ENCODE measurements at regions of chr5 and their contacts with region 1.

Region 1: GRCh38 chr5:759111-759751 is 25.3 kb downstream of the ZDHHC11B start:
- DNase-seq: peak; percentile 56
- ATAC-seq: peak; percentile 65
- H3K4me3 Mint-ChIP-seq: peak overlapping the region; percentile 7
- H3K27ac Mint-ChIP-seq: no peak overlapping the region
- H3K4me1 Mint-ChIP-seq: peaks cover 21% of the 10 kb centered on the region
- H3K27me3 Mint-ChIP-seq: peaks cover 2% of the 10 kb centered on the region

Region 2: GRCh38 chr5:431001-431710 is 328.1 kb before region 1 on chr5:
- CTCF ChIA-PET with region 1: no interaction called
- POLR2A ChIA-PET with region 1: no interaction called
- intact Hi-C with region 1: no loop called
- DNase-seq: peak; percentile 73
- ATAC-seq: peak; percentile 90
- H3K4me3 Mint-ChIP-seq: no peak overlapping the region
- H3K27ac Mint-ChIP-seq: no peak overlapping the region
- H3K4me1 Mint-ChIP-seq: no peaks in the 10 kb centered on the region
- H3K27me3 Mint-ChIP-seq: peaks cover 4% of the 10 kb centered on the region

Region 3: GRCh38 chr5:691817-692528 is 67.3 kb before region 1 on chr5:
- CTCF ChIA-PET with region 1: no interaction called
- POLR2A ChIA-PET with region 1: no interaction called
- intact Hi-C with region 1: loop called in 1 of 2 experiments (anchors 2 kb)
- DNase-seq: no peak
- ATAC-seq: no peak
- H3K4me3 Mint-ChIP-seq: peak overlapping the region; percentile 19
- H3K27ac Mint-ChIP-seq: no peak overlapping the region
- H3K4me1 Mint-ChIP-seq: no peaks in the 10 kb centered on the region
- H3K27me3 Mint-ChIP-seq: peaks cover 3% of the 10 kb centered on the region

Region 4: DNA sequence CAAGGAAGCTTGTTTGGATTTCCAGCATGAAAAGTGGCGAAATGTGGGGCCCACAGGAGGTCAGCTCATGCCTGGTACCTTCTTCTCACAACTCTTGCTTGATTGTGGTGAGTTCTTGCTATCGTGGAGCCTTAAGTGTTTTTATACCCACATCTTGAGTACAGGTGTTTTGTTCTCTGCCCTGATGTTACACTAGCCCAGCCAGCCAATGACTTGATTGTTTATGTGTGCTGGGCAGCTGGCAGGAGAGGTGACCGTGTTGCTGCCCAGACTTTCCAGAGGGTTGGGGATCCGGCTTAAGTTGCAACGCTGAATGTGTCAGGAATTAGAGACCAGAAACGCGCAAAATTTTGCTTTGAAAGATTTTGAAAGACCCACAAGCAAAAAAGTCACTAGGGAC is 42.1 kb before region 1 on chr5:
- CTCF ChIA-PET with region 1: no interaction called
- POLR2A ChIA-PET with region 1: no interaction called
- intact Hi-C with region 1: no loop called
- DNase-seq: no peak
- ATAC-seq: no peak
- H3K4me3 Mint-ChIP-seq: no peak overlapping the region
- H3K27ac Mint-ChIP-seq: no peak overlapping the region
- H3K4me1 Mint-ChIP-seq: no peaks in the 10 kb centered on the region
- H3K27me3 Mint-ChIP-seq: peaks cover 27% of the 10 kb centered on the region

Region 5: DNA sequence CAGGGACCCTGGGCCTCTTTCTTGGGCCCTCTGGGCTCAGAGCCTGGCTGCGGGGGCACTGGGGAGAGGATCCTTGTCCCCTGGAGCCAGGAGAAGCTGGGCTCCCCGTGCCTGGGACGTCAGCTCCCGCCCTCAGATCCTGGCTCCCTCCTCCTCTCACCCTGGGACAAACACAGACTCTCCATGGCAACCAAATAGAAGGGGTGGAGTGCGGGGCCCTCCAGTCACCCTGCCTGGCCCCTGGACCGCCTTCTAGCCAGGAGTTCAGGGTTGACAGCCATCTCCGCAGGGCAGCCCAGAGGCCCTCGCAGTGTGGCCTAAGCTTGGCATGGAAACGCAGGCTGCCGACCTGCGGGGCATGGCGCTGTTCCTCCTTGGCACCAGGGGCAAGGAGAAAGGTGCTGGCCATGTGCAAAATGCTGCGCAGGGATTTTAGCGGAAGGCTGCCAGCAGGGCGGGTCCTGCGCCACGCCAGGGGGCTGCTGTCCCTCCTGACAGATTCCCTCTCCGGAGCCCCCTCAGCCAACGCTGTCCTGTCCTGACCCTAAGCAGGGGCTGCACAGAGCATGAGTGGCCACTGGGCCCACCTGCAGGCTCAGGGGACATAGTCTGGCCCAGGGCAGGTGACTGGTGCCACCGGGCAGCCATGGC is 90.5 kb after region 1 on chr5:
- CTCF ChIA-PET with region 1: no interaction called
- POLR2A ChIA-PET with region 1: no interaction called
- intact Hi-C with region 1: loop called (anchors 2 to 5 kb)
- DNase-seq: no peak
- ATAC-seq: no peak
- H3K4me3 Mint-ChIP-seq: no peak overlapping the region
- H3K27ac Mint-ChIP-seq: no peak overlapping the region
- H3K4me1 Mint-ChIP-seq: peaks cover 7% of the 10 kb centered on the region
- H3K27me3 Mint-ChIP-seq: peaks cover 3% of the 10 kb centered on the region

Region 6: DNA sequence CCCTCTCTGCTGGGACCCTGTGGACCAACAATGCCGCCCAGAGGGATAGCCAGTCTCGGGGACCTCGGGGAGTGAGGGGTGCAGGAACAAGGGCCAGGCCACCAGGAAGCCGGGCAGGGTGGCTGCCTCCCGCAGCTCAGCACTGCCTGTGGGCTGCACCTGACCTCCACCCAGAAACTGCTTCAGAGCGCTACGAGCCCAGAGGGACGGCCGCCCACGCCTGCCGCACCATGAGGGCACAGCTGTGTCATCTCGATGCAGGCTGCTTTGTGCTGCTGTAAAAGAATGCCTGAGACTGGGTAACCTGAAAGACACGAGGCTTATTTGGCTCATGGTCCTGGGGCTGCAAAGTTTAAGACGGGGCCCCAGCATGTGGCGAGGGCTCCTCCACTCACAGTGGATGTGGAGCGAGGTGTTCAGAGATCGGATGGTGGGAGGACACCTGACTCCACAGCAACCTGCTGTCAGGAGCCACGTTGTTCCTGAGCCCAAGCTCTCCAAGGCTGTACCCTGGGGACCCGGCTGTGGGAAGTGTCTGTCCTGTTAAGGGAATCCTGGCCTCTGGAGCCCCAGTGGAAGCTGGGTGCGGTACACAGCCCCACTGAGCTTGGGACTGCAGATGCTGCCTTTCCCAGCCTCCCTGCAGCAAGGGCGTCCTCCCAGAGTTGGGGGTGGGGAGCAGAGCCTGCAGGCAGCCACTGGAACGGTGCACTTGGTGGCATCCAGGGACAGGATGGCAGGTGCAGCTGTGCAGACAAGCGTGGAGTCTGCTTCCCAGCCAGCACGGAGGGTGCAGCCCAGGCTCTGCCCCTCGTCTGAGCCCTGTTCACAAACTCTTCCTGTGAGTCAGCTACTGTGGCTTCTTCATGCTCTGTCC is 103.4 kb after region 1 on chr5:
- CTCF ChIA-PET with region 1: no interaction called
- POLR2A ChIA-PET with region 1: no interaction called
- intact Hi-C with region 1: no loop called
- DNase-seq: no peak
- ATAC-seq: no peak
- H3K4me3 Mint-ChIP-seq: no peak overlapping the region
- H3K27ac Mint-ChIP-seq: no peak overlapping the region
- H3K4me1 Mint-ChIP-seq: no peaks in the 10 kb centered on the region
- H3K27me3 Mint-ChIP-seq: no peaks in the 10 kb centered on the region